ENCODE measurements at regions of chr14 and their contacts with region 1.

Region 1: DNA sequence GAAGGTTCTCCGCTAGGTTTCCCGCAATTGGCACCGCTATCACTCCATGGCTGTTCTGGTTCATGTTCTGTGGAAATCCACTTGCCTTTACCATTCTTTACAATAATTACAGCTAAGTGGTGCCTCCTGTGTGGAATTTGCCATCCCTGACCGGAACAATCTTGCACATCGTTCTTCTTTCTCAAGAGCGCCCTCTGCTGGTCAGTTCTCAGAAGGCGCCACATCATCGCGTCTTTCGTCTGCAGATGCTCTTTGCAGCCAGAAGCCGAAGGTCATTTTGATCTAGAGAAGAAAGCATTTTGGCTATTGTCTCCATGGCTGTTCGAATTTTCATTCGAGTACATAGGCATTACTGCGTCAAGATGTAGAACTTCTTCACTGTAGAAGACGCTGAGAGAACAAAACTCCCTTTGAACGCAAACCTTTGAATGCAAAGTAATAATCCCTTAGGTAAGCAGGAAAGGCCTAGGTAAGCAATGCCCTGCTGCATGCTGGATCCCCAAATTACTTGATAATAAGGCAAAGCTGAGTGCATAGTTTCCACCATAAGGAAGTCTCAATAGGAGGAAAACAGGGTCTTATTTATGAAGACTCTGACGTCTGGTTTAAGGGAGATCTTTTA is 10.1 kb upstream of the RTRAF start:
- DNase-seq: peak; percentile 52
- CTCF ChIP-seq: peak; percentile 91

Region 2: DNA sequence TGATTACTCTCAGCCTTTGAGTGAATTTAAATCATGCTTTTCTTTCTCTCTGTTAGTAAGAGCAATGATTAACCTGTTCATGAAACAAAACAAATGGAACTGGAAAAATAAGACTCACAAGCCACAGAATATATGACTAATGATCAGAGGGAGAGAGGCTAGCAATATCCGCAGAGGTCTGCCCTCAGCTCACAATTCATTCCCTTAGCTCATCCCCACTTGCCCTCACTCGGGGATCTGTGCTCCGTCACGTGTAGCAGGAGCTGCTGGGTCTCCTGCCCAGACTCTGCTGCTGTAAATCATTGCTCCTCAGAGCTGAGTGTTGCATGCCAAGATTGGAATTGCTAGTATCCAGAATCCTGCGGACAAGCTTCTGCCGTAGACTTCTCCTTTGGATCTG is 171.8 kb before region 1 on chr14:
- CTCF ChIA-PET with region 1: interaction called, 11 read pairs
- POLR2A ChIA-PET with region 1: no interaction called
- DNase-seq: no peak
- CTCF ChIP-seq: no peak

Region 3: GRCh38 chr14:51884086-51884927 is 94.9 kb before region 1 on chr14:
- CTCF ChIA-PET with region 1: interaction called, 10 read pairs
- POLR2A ChIA-PET with region 1: no interaction called
- DNase-seq: peak; percentile 25
- CTCF ChIP-seq: no peak

Region 4: DNA sequence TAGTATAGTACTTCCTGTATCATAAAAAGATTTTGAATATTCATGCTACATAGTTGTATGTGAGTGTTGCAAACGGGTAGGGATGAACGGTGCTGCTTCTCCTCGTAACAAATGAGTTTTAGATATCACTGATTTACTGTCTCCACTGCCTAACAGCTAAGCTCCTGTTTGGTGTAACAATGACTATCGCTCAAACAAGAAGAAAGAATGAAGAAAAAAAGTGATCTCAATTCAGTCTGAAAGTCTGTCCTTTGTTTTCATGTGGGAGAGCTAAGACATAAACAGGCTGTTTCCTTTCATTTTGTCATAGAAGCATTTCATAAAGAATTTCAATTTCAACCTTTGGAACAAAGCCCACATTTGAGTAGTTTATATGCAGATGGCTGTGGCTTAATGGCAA is 15.9 kb before region 1 on chr14:
- CTCF ChIA-PET with region 1: interaction called, 62 read pairs
- POLR2A ChIA-PET with region 1: no interaction called
- DNase-seq: no peak
- CTCF ChIP-seq: no peak

Region 5: GRCh38 chr14:51996148-51996746 is 17.0 kb after region 1 on chr14:
- CTCF ChIA-PET with region 1: interaction called, 47 read pairs
- POLR2A ChIA-PET with region 1: no interaction called
- DNase-seq: no peak
- CTCF ChIP-seq: peak; percentile 41

Region 6: GRCh38 chr14:52043690-52044089 is 64.5 kb after region 1 on chr14:
- CTCF ChIA-PET with region 1: no interaction called
- POLR2A ChIA-PET with region 1: no interaction called
- DNase-seq: peak; percentile 29
- CTCF ChIP-seq: peak; percentile 44